ENCODE measurements at regions of chr2 and their contacts with region 1.

Region 1: GRCh38 chr2:43426305-43427031 is 169.4 kb downstream of the THADA start:
- DNase-seq: peak; percentile 80
- H3K4me3 Mint-ChIP-seq: no peak overlapping the region
- H3K27ac Mint-ChIP-seq: peak overlapping the region; percentile 19
- H3K4me1 Mint-ChIP-seq: peaks cover 38% of the 10 kb centered on the region
- H3K27me3 Mint-ChIP-seq: no peaks in the 10 kb centered on the region

Region 2: DNA sequence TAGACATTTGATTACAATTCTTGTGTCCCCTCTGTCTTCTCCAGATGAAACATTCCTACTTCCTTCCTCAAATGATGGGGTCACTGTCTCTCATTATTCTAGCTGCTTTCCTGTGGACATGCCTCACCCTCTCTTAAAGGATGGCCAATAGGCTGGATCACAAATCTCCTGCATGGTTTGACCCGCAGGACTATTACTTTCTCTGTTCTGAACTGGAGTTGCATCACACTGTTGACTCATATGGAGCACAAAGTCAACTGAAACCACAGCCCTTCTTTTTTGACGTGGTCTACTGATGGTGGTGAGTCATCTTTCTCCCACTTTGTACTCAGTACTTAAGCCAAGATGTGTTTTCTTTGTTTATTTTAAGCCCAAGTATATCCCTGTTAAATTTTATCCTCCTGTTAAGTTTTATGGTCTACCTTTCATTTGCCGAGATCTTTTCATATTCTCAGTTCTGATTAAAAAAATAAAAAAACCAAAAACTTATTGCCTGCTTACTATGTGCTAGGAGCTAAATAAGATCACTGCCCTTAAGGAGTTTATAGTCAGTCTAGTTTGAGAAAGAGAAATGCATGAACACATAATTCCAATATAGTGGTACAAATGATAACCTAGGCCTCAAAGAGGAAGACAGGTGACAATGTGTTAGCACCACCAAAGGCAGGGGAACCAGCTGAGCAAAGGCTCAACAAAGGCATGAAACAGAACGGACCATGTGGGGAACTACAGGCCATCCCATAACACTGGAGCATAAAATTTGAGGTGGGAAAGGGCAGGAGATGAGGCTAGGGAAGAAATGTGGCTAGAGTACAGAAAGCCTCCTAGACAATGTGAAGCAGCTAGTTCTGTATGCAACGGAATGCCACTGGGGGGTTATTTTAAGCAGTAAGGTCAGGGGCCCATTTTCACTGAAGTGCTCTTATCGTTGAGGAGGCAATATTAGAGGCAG is 132.4 kb before region 1 on chr2:
- intact Hi-C with region 1: loop called (anchors 1 kb)
- DNase-seq: peak; percentile 54
- H3K4me3 Mint-ChIP-seq: peak overlapping the region; percentile 34
- H3K27ac Mint-ChIP-seq: peak overlapping the region; percentile 68
- H3K4me1 Mint-ChIP-seq: peaks cover 31% of the 10 kb centered on the region
- H3K27me3 Mint-ChIP-seq: no peaks in the 10 kb centered on the region

Region 3: DNA sequence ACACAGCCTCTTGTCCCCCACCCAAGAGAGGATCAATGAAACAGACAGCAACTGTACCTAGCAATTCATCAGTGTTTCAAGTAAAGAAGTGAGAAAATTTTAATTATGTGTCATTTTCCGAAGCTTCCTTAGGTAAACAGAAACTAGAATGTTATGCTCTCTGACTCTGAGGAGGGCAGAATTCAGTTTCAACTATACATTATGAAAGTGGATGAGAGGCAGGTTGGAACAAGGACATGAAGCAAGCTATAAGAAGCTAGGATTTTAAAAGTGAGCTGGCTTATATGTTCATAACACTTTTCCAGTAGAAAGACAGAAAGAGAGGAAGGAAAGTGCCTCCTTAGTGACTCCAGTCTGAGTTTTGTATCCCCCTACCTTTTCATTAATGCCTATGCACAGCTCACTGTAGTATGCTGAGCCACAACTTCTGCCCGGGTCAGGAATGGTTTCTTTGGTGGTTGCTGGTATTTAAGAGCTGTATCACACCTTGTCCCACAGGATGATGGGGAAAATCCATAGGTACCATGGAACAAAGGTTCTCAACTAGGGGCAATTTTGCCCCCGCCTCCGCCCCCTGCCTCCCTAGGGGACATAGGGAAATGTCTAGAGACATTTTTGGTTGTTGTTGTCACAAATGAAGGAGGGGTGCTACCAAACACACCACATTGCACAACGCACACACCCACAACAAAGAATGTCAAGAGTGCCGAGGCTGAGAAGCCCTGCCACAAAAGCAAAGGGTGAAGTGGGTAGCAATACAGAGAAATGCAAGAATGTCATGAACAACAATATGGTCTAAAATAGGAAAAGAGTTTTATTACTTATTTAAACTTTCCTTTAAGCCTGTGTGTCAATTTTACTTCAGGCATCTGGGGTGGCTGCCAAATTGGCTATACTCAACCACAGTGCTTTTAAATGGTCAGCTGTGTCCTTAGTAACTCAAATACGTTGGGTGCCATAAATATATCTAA is 39.1 kb before region 1 on chr2:
- intact Hi-C with region 1: loop called (anchors 1 kb)
- DNase-seq: no peak
- H3K4me3 Mint-ChIP-seq: peak overlapping the region; percentile 31
- H3K27ac Mint-ChIP-seq: peak overlapping the region; percentile 68
- H3K4me1 Mint-ChIP-seq: peaks cover 40% of the 10 kb centered on the region
- H3K27me3 Mint-ChIP-seq: no peaks in the 10 kb centered on the region

Region 4: DNA sequence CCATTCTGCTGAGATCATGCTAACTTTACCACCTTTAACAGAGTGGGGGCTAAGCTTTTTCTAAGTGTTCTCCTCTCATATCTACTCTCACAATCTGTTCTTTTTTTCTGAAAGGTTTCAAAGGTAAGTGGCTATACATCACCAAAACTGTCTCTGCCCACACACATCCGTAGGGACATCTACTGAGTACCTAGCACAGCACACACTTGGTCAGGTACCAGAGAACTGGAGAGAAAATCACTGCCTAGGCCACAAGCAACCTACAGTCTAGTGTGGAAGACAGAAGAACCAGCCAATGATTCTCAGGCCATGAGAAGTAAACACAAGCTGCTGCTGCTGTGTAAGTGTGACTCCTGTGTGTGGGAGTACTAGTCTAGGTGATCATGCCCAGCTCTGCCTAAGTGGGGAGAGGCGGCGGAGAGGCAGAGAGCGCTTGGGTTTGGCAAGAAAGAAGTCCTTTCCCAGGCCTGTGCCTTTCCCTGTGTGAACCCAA is 24.0 kb before region 1 on chr2:
- intact Hi-C with region 1: loop called (anchors 2 kb)
- DNase-seq: no peak
- H3K4me3 Mint-ChIP-seq: no peak overlapping the region
- H3K27ac Mint-ChIP-seq: no peak overlapping the region
- H3K4me1 Mint-ChIP-seq: peaks cover 15% of the 10 kb centered on the region
- H3K27me3 Mint-ChIP-seq: no peaks in the 10 kb centered on the region

Region 5: GRCh38 chr2:43455731-43456642 is 29.5 kb after region 1 on chr2:
- intact Hi-C with region 1: loop called (anchors 2 kb)
- DNase-seq: no peak
- H3K4me3 Mint-ChIP-seq: no peak overlapping the region
- H3K27ac Mint-ChIP-seq: no peak overlapping the region
- H3K4me1 Mint-ChIP-seq: peaks cover 42% of the 10 kb centered on the region
- H3K27me3 Mint-ChIP-seq: no peaks in the 10 kb centered on the region

Region 6: DNA sequence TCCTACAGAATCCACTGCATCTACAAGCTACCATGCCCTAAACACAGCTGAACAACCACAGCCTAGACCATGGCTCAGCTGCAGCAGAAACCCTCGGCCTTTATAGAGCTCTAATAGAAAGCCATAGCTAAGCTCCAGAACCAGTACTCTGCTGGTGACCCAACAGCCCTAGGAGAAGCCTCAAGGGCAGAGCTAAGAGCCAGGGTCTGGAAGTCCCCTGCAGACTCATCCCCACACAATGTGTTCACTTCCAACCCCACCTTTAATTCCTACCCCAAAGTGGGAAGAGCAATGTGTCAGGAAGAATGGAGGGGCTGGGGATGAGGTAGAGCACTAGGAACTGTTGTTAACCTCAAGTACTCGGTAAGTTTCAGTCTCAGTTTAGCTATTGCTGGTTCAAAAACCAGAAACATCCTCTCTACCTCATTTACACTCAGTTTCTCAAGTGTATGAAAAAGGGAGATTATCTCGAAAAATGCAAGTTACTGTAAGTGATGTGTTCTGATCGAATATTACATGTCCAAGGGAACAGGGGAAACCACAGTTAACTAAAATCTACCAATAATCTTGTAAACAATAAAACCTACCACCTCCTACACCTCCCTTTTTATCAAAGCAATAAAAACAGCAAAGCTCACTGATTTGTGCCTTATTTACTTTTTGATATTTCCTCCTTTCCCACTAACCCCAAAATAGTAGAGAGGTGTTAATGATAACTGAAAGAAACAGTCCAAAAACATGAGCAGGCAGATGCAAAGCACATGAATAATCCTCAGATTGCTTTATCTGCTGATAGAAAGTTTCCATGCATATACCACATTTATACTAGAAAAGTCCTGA is 133.1 kb after region 1 on chr2:
- intact Hi-C with region 1: loop called (anchors 1 kb)
- DNase-seq: no peak
- H3K4me3 Mint-ChIP-seq: peak overlapping the region; percentile 20
- H3K27ac Mint-ChIP-seq: peak overlapping the region; percentile 89
- H3K4me1 Mint-ChIP-seq: peaks cover 53% of the 10 kb centered on the region
- H3K27me3 Mint-ChIP-seq: no peaks in the 10 kb centered on the region

Region 7: GRCh38 chr2:43592443-43592842 is 166.0 kb after region 1 on chr2:
- intact Hi-C with region 1: no loop called
- DNase-seq: no peak
- H3K4me3 Mint-ChIP-seq: no peak overlapping the region
- H3K27ac Mint-ChIP-seq: no peak overlapping the region
- H3K4me1 Mint-ChIP-seq: peaks cover 28% of the 10 kb centered on the region
- H3K27me3 Mint-ChIP-seq: no peaks in the 10 kb centered on the region

Region 8: DNA sequence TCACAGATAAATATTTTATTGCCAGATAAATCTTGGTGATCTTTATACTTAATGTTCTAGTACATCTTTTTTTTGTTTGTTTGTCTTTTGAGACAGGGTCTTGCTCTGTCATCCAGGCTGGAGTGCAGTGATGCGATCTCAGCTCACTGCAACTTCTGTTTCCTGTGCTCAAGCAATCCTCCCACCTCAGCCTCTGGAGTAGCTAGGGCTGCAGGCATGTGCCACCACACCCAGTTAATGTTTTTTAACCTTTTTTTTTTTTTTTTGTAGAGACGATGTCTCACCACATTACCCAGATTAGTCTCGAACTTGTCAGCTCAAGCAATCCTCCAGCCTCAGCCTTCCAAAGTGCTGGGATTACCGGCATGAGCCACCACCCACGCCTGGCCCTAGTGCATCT is 258.9 kb after region 1 on chr2:
- intact Hi-C with region 1: no loop called
- DNase-seq: no peak
- H3K4me3 Mint-ChIP-seq: no peak overlapping the region
- H3K27ac Mint-ChIP-seq: no peak overlapping the region
- H3K4me1 Mint-ChIP-seq: peaks cover 8% of the 10 kb centered on the region
- H3K27me3 Mint-ChIP-seq: peaks cover 3% of the 10 kb centered on the region